Activated CD8-positive, alpha-beta memory T cell treated with anti-CD3 and anti-CD28 coated beads, Interleukin-2, amount 10 ng/mL, durations not matched to agents 7 days and 5 days (primary cell): ENCODE measurements at regions of chr11 and their contacts with region 1.

Region 1: DNA sequence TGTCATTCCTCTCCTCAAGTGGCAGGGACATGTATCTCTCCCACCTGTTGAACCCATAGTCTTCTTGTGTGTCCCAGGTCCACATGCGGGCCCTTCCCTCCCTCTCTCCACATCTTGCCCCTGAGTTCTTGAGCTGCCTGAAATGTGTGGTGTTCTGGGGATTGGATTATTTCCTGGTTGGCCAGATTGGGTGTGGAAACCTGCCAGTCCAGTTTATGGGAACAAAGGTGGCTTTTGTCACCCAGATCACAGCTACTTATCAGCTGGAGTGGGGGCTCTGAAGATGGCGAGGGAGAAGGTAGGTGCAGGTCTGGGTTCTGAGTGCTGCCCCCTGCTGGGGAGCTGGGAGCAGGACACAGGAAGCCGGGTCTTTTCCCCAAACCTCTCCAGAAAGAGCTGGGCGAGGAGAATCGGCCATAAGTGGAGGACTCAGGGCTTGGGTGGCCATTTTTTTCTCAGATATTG is 14.2 kb downstream of the DTX4 start:
- DNase-seq: no peak
- ATAC-seq: peak; percentile 65
- H3K4me3 Mint-ChIP-seq: no peak overlapping the region
- H3K27ac Mint-ChIP-seq: no peak overlapping the region
- H3K4me1 Mint-ChIP-seq: peaks cover 3% of the 10 kb centered on the region
- H3K27me3 Mint-ChIP-seq: peaks cover 3% of the 10 kb centered on the region

Region 2: GRCh38 chr11:59197991-59198390 is 11.8 kb after region 1 on chr11:
- CTCF ChIA-PET with region 1: interaction called, 35 read pairs
- DNase-seq: no peak
- ATAC-seq: no peak
- H3K4me3 Mint-ChIP-seq: no peak overlapping the region
- H3K27ac Mint-ChIP-seq: no peak overlapping the region
- H3K4me1 Mint-ChIP-seq: peaks cover 5% of the 10 kb centered on the region
- H3K27me3 Mint-ChIP-seq: peaks cover under 1% of the 10 kb centered on the region